Heart left ventricle (tissue), 16 donors: ENCODE measurements at regions of chr22 and their contacts with region 1.

Region 1: DNA sequence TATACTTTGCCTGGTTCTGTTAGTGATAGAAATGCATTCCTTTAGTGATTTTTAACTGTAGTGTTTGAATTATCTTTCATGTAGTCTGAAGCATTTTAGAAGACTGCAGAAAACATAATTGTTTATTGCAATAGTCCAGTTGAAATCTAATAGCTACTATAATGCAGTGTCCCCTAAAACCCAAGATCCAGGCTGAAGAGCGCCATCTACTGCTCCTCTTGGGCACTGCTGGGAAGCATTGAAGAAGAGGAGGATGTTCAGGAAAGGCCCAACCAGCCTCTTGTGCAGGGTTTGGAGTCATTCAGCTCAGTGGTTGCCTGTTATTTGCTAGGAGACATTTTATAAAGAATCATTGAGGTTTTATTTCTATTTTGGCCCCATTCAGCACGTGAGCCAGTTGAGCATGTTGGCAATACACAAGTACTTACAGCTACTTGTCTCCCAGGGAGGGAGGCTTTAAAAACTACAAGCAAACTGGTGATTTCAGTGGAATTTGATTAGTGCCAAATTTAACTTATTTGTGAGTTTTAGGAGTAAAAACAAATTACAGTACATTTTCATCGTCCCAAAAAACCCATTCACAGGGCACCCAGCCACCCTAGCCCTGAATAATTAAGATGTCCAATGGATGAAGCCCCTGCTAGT is 74.9 kb upstream of the HORMAD2 start:
- DNase-seq: peak in 4 of 5 donors; percentile 55 to 69 (median 61)
- ATAC-seq: peak; percentile 53 to 91 (median 88)
- H3K4me3 ChIP-seq: no peak overlapping the region
- H3K27ac ChIP-seq: no peak overlapping the region
- H3K4me1 ChIP-seq: peaks cover 0 to 17% (median 9%) of the 10 kb centered on the region in 12 donors
- H3K27me3 ChIP-seq: no peaks in the 10 kb centered on the region
- CTCF ChIP-seq: peak; percentile 90 to 99 (median 96)
- POLR2A ChIP-seq: no peak

Region 2: GRCh38 chr22:29635734-29636357 is 369.5 kb before region 1 on chr22:
- intact Hi-C with region 1: loop called in 1 of 10 experiments (anchors 10 kb)
- DNase-seq: no peak
- ATAC-seq: peak in 2 of 4 donors; percentile 43 to 67
- H3K4me3 ChIP-seq: no peak overlapping the region
- H3K27ac ChIP-seq: no peak overlapping the region
- H3K4me1 ChIP-seq: peaks cover 0 to 19% (median 6%) of the 10 kb centered on the region in 12 donors
- H3K27me3 ChIP-seq: no peaks in the 10 kb centered on the region
- CTCF ChIP-seq: peak; percentile 33 to 69 (median 50)
- POLR2A ChIP-seq: no peak

Region 3: GRCh38 chr22:29766632-29767170 is 238.6 kb before region 1 on chr22 and contains the start of gene ZMAT5:
- intact Hi-C with region 1: loop called in 3 of 10 experiments (anchors 5 to 10 kb)
- DNase-seq: peak; percentile 94 to 97 (median 96)
- ATAC-seq: peak; percentile 97 to 99 (median 98)
- H3K4me3 ChIP-seq: peak within 1 kb of the TSS; percentile 70 to 98 (median 80)
- H3K27ac ChIP-seq: peak within 1 kb of the TSS; percentile 87 to 96 (median 91)
- H3K4me1 ChIP-seq: peaks cover 6 to 42% (median 29%) of the 10 kb centered on the region in 12 donors
- H3K27me3 ChIP-seq: no peaks in the 10 kb centered on the region
- CTCF ChIP-seq: no peak
- POLR2A ChIP-seq: peak in 1 of 2 donors; percentile 55
- total RNA-seq, gene ZMAT5: 19.4 to 28.9 (median 20.9) TPM

Region 4: GRCh38 chr22:29855611-29856181 is 149.6 kb before region 1 on chr22:
- intact Hi-C with region 1: loop called in 1 of 10 experiments (anchors 1 kb)
- DNase-seq: peak; percentile 71 to 89 (median 82)
- ATAC-seq: peak; percentile 95 to 98 (median 96)
- H3K4me3 ChIP-seq: no peak overlapping the region
- H3K27ac ChIP-seq: peak overlapping the region in 11 of 12 donors; percentile 4 to 96 (median 65)
- H3K4me1 ChIP-seq: peaks cover 0 to 10% (median 0%) of the 10 kb centered on the region in 12 donors
- H3K27me3 ChIP-seq: no peaks in the 10 kb centered on the region
- CTCF ChIP-seq: peak in 7 of 12 donors; percentile 11 to 47 (median 32)
- POLR2A ChIP-seq: no peak

Region 5: DNA sequence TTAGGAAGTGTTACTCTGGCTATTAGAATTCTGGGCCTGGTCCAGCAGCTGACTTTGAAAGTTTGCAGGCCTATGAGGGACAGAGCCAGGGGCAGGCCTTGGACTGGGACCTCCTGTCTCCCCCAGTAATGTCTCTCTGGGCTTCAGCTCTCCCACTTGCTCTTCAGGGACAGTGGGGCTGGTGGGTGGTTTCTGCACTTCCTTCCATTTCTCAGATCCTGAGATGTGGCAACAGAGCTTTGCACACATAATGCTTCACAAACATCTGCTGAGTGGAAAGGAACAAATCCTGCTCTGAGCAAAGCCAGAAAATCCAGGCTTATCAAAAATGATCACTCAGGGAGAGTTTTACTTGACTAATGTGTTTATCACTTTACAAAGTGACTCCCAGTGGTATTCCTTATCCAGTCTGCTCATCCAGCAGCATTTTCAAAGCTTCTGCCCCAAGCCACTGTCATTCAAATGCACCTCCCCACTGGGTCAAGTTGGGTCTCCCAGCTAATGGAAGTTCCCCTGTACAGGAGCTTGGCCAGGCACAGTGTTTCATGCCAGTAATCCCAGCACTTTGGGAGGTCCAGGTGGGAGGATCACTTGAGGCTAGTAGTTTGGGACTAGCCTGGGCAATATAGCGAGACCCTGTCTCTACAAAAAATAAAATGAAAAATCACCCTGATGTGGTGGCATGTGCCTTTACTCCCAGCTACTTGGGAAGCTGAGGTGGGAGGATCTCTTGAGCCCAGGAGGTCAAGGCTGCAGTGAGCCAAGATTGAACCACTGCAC is 675.8 kb after region 1 on chr22:
- intact Hi-C with region 1: no loop called
- DNase-seq: peak in 2 of 5 donors; percentile 16 to 52
- ATAC-seq: peak in 3 of 4 donors; percentile 37 to 56 (median 47)
- H3K4me3 ChIP-seq: no peak overlapping the region
- H3K27ac ChIP-seq: peak overlapping the region in 1 of 12 donors; percentile 32
- H3K4me1 ChIP-seq: peaks cover 0 to 11% (median 0%) of the 10 kb centered on the region in 12 donors
- H3K27me3 ChIP-seq: peaks cover 0 to 2% (median 0%) of the 10 kb centered on the region in 9 donors
- CTCF ChIP-seq: no peak
- POLR2A ChIP-seq: no peak